Left cardiac atrium (tissue), 4 donors: ENCODE measurements at regions of chr13 and their contacts with region 1.

Region 1: GRCh38 chr13:109786457-109787134 is at the start of gene IRS2:
- DNase-seq: peak; percentile 94
- ATAC-seq: peak; percentile 83 to 86
- total RNA-seq, gene IRS2: 27.9 to 29.6 TPM

Region 2: DNA sequence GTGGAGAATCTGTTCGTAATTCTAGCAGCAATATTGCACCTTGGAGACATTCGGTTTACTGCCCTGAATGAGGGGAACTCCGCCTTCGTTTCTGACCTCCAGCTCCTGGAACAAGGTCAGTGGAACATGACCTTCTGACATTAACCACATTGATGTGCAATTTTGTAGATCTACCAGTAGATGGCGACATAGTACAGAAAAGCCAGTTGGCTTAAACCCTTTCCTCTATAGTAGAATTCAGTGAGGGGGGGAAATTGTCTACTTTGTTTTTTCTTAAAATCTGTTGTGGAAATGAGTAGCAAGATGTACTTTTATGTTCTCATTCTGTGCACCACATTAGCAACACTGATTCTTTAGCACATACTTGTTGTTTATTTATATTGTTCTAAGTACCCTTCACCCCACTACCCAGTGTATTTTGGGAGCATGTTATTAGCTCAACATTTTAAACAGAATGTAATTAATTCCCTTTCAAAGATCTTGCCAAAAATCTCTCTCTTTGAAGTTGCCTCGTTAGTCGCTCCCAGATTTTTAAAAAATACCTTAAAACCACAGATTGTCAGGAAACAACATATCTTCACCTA is 825.0 kb before region 1 on chr13:
- intact Hi-C with region 1: loop called in 1 of 2 experiments (anchors 5 kb)
- DNase-seq: no peak
- ATAC-seq: peak; percentile 59 to 78

Region 3: GRCh38 chr13:109058082-109058481 is 728.5 kb before region 1 on chr13:
- intact Hi-C with region 1: no loop called
- DNase-seq: no peak
- ATAC-seq: no peak

Region 4: GRCh38 chr13:109436055-109436622 is 350.5 kb before region 1 on chr13:
- intact Hi-C with region 1: no loop called
- DNase-seq: no peak
- ATAC-seq: no peak